Colonic mucosa (tissue), 4 donors: ENCODE measurements at regions of chr15 and their contacts with region 1.

Region 1: DNA sequence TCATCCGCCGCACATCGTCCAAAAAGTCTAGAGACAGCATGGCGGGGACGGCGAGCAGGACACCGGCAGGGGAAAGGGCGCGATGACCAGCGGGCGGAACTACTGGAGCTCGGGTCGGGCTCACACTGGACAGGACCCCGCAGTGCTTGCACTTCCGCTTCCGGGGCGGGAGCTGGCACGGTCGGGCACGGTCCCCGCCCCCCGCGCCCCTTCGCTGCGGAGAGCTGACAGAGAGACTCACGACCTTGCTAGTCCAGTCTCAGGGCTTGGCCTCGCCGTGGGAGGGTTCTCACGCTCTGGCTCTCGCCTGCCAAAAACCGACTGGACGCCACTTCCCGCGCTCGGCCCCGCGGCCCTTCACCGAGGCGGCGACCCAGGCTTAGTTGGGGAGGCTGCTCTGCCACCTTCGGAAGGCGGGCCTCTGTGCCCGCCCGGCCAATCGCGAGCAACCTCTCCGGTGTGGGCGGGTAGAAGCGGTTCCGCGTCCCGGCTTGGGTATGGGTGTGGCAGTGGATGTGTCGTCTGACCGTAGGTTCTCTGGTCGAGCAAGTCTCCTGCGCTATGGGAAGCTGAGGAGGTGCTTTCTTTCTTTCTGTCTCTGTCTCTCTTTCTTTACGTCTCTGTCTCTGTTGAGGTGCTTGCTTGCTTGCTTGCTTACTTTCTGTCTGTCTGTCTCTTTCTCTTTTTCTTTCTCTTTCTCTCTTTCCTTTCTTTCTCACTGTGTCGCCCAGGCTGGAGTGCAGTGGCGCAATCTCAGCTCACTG is at the start of gene SEC11A:
- DNase-seq: peak; percentile 98
- H3K4me3 ChIP-seq: peak within 1 kb of the TSS; percentile 81
- H3K27ac ChIP-seq: peak within 1 kb of the TSS; percentile 96
- H3K4me1 ChIP-seq: peaks cover 11% of the 10 kb centered on the region
- H3K27me3 ChIP-seq: no peaks in the 10 kb centered on the region
- CTCF ChIP-seq: no peak
- total RNA-seq, gene SEC11A: 146 to 154 TPM

Region 2: DNA sequence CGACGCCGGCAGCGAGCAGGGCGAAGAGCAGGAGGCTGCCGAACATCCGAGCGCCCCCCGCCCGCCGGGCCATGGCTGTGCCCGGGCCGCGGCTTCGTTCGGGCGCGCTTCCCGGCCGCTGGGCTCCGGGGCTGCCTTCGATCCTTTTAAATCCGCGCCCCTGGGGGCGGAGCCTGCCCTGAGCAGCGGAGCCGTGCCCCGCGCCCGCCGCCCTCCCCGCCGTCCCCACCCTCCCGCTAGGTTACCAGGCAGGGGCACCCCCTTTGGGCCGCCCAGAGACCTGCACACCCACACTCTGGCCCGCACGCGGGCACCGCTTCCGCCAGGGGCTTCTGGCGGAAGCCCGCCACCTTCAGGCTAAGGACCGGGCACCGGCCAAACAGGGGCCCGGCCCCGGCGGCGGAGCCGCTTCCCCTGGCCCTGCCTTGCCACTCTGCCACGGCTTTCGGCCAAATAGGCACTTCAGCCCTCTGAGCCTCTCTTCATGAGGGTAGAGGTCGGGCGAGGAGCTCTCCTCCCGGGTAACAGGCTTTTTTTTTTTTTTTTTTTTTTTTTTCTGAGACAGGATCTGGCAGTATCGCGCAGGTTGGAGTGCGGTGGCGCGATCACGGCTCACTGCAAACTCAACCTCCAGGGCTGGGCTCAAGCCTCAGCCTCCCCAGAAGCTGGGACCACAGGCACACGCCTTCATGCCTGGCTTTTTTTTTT is 58.0 kb before region 1 on chr15 and contains the start of gene NMB:
- intact Hi-C with region 1: loop called (anchors 10 kb)
- DNase-seq: peak; percentile 84
- H3K4me3 ChIP-seq: peak within 1 kb of the TSS; percentile 65
- H3K27ac ChIP-seq: peak within 1 kb of the TSS; percentile 61
- H3K4me1 ChIP-seq: peaks cover 2% of the 10 kb centered on the region
- H3K27me3 ChIP-seq: no peaks in the 10 kb centered on the region
- CTCF ChIP-seq: peak; percentile 42
- total RNA-seq, gene NMB: 2.8 to 4.4 TPM